Right cardiac atrium (tissue), 5 donors: ENCODE measurements at regions of chr10 and their contacts with region 1.

Region 1: GRCh38 chr10:101782811-101783735 is at the start of gene NPM3:
- DNase-seq: peak; percentile 84 to 93 (median 91)
- ATAC-seq: peak; percentile 75 to 77
- H3K4me3 ChIP-seq: peak within 1 kb of the TSS; percentile 37
- H3K27ac ChIP-seq: no peak within 1 kb of the TSS
- H3K4me1 ChIP-seq: peaks cover 3% of the 10 kb centered on the region
- H3K27me3 ChIP-seq: no peaks in the 10 kb centered on the region
- total RNA-seq, gene NPM3: 5.0 to 10.7 (median 7.4) TPM

Region 2: DNA sequence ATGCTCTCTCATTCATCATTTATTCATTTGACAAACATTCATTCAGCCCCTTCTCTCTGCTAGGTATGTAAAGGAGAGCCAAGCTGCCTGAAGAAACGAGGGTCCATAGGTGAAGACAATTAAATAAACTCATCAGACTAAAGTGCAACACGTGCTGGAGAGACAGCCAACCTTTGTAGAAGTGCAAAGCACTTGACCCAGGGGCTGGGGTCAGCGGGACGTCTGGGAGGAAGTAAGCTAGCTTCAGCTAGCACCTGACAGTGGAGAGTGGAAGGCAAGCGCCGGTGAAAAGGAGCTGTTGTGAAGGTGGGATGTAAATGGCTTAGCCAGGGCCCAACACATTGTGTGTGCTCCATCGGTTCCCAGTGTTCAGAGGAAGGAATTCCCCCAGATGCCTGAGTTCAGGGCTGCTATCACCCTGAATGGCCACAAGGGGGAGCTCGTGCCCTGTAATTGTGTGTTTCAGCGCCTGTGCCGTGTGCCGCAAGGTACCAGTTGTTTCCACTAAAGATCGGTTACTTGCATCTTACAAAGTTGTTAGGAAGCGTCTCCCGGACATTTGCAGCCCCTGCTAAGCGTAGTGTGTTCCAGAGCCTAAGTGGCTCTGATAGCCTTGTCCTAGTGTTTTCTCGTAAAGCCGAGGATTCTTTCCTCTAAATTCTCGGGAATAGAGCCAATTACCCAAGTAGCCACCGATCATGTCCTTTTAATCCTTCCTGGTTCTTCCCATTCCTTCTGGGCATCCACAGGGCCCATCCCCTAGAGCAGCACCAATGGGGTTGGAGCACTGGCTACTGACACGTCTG is 621.4 kb before region 1 on chr10:
- intact Hi-C with region 1: loop called in 1 of 4 experiments (anchors 10 kb)
- DNase-seq: peak; percentile 52 to 77 (median 71)
- ATAC-seq: peak; percentile 86 to 89
- H3K4me3 ChIP-seq: peak overlapping the region; percentile 42
- H3K27ac ChIP-seq: no peak overlapping the region
- H3K4me1 ChIP-seq: no peaks in the 10 kb centered on the region
- H3K27me3 ChIP-seq: no peaks in the 10 kb centered on the region

Region 3: GRCh38 chr10:101512738-101513137 is 270.3 kb before region 1 on chr10:
- intact Hi-C with region 1: no loop called
- DNase-seq: no peak
- ATAC-seq: no peak
- H3K4me3 ChIP-seq: no peak overlapping the region
- H3K27ac ChIP-seq: no peak overlapping the region
- H3K4me1 ChIP-seq: no peaks in the 10 kb centered on the region
- H3K27me3 ChIP-seq: no peaks in the 10 kb centered on the region

Region 4: GRCh38 chr10:101602761-101603398 is 180.2 kb before region 1 on chr10:
- intact Hi-C with region 1: loop called (anchors 2 to 5 kb)
- DNase-seq: peak; percentile 74 to 90 (median 89)
- ATAC-seq: peak; percentile 84 to 87
- H3K4me3 ChIP-seq: no peak overlapping the region
- H3K27ac ChIP-seq: no peak overlapping the region
- H3K4me1 ChIP-seq: no peaks in the 10 kb centered on the region
- H3K27me3 ChIP-seq: no peaks in the 10 kb centered on the region

Region 5: GRCh38 chr10:101609481-101609880 is 173.6 kb before region 1 on chr10:
- intact Hi-C with region 1: loop called in 3 of 4 experiments (anchors 5 kb)
- DNase-seq: no peak
- ATAC-seq: no peak
- H3K4me3 ChIP-seq: no peak overlapping the region
- H3K27ac ChIP-seq: no peak overlapping the region
- H3K4me1 ChIP-seq: no peaks in the 10 kb centered on the region
- H3K27me3 ChIP-seq: no peaks in the 10 kb centered on the region